Tibial artery (tissue), 4 donors: ENCODE measurements at regions of chr4 and their contacts with region 1.

Region 1: DNA sequence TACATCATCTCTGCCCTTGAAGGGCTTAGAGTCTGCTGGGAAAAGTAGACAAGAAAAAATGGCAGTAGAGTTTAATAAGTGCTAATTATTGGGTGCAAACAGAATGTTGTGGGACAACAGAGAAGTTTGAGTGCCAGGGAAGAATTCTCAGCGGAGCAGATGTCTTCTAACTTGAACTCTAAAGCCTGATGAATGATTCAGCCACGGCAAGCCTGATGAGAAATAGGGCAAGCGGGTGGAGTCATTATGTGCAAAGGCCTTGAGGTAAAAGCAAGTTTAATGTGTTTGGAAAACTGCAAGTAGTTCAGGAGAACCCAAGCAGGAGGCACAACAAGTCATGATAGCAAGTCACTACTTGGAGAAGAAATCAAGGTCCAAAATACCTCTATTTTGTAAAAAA is 37.5 kb downstream of the GC start:
- DNase-seq: no peak
- H3K4me3 ChIP-seq: no peak overlapping the region
- H3K27ac ChIP-seq: no peak overlapping the region
- H3K4me1 ChIP-seq: no peaks in the 10 kb centered on the region
- H3K27me3 ChIP-seq: no peaks in the 10 kb centered on the region
- CTCF ChIP-seq: no peak

Region 2: GRCh38 chr4:71816676-71817303 is 70.4 kb after region 1 on chr4:
- intact Hi-C with region 1: loop called (anchors 2 kb)
- DNase-seq: no peak
- H3K4me3 ChIP-seq: no peak overlapping the region
- H3K27ac ChIP-seq: no peak overlapping the region
- H3K4me1 ChIP-seq: no peaks in the 10 kb centered on the region
- H3K27me3 ChIP-seq: no peaks in the 10 kb centered on the region
- CTCF ChIP-seq: no peak